Panc1 (cell line): ENCODE measurements at regions of chr7 and their contacts with region 1.

Region 1: GRCh38 chr7:4631664-4632171 is 50.4 kb upstream of the FOXK1 start:
- DNase-seq: peak; percentile 94
- ATAC-seq: peak; percentile 95
- H3K4me3 ChIP-seq: peak overlapping the region; percentile 30 to 70
- H3K27ac ChIP-seq: peak overlapping the region; percentile 67
- H3K4me1 ChIP-seq: peaks cover 16% of the 10 kb centered on the region
- H3K27me3 ChIP-seq: no peaks in the 10 kb centered on the region
- CTCF ChIP-seq: peak; percentile 86

Region 2: DNA sequence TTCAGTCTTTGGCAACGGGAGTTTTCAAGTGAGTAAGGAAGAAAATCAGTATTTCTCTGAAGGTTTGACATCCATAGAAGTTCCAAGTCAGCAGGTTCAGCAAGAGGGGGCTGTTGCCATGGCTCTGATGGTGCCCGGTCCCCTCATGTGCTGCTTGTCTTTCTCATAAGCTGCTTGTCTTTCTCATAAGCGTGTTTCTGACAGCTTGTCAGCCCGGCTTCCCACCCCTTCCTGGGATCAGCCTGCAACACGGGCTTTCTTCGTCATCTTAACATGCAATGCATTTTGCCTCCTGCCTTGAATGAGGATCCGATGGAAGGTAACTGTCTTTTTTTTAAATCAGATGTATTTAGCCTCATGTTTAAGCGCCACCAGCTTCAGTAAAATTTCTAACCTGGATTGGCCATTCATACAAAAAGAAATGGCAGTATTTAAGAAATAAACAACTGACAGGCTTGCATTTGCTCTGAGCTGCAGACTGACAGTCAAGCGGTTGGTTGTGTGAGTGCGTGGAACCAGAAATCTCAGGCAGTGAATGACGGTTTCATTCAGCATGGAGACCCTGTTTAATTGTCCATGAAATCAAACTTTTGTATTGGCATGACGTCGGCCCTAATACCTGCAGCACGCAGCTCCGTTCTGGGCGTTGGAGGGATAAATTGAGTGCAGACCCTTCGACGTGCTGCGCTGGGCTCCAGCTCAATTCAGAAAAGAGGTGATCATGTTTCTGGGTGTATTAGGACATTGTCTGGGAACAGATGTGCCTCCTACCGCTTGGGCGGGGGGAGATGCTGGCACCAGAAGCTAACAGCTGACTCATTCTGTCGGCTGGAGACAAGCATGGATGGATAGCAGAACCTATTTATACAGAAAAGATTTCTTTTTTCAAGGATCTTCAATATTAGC is 404.4 kb before region 1 on chr7:
- CTCF ChIA-PET with region 1: no interaction called
- POLR2A ChIA-PET with region 1: interaction called, 15 read pairs
- in situ Hi-C with region 1: no loop called
- intact Hi-C with region 1: no loop called
- DNase-seq: no peak
- ATAC-seq: no peak
- H3K4me3 ChIP-seq: no peak overlapping the region
- H3K27ac ChIP-seq: no peak overlapping the region
- H3K4me1 ChIP-seq: no peaks in the 10 kb centered on the region
- H3K27me3 ChIP-seq: no peaks in the 10 kb centered on the region
- CTCF ChIP-seq: no peak

Region 3: DNA sequence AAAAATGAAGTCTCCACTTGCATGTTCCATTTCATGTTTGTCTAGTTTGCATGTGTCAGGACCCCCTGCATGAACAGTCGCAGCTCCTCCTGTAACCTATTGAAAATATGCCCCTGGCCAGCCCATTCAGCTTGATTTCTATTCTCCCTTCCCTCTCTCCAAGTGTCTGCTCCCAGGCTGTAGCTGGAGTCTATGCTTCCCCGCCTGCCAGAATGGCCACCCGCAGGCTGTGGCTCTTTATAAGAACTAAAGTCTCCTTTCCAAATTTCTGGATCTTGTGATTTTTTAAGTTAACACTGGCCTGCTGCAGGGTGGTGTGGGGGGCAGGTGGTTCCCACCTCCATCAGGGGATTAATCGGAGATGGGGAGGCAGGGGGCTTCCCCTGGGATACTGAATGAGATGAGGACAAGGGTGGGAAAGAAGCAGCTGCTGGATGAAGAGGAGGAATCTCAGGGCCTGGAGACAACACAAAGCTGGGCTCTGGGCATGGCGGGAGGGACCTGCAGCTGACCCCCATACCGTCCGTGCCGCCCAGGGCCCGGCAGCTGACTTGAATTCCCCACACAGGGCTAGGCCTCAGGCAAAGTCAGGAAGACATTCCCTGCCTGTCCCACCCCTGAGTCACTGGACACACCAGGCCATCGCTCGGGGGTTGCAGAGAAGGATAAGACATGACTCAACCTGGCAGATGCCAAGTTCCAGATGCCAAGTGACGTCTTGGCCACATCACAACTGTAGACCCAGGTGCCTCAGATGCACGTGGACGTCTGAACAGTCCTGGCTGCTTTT is 349.1 kb before region 1 on chr7:
- CTCF ChIA-PET with region 1: no interaction called
- POLR2A ChIA-PET with region 1: no interaction called
- in situ Hi-C with region 1: no loop called
- intact Hi-C with region 1: no loop called
- DNase-seq: peak; percentile 35
- ATAC-seq: peak; percentile 82
- H3K4me3 ChIP-seq: no peak overlapping the region
- H3K27ac ChIP-seq: no peak overlapping the region
- H3K4me1 ChIP-seq: no peaks in the 10 kb centered on the region
- H3K27me3 ChIP-seq: no peaks in the 10 kb centered on the region
- CTCF ChIP-seq: no peak

Region 4: GRCh38 chr7:4575254-4575653 is 56.5 kb before region 1 on chr7:
- CTCF ChIA-PET with region 1: no interaction called
- POLR2A ChIA-PET with region 1: interaction called, 11 read pairs
- in situ Hi-C with region 1: no loop called
- intact Hi-C with region 1: no loop called
- DNase-seq: no peak
- ATAC-seq: no peak
- H3K4me3 ChIP-seq: no peak overlapping the region
- H3K27ac ChIP-seq: no peak overlapping the region
- H3K4me1 ChIP-seq: no peaks in the 10 kb centered on the region
- H3K27me3 ChIP-seq: no peaks in the 10 kb centered on the region; the same call in 1 of the 2 replicates
- CTCF ChIP-seq: no peak

Region 5: DNA sequence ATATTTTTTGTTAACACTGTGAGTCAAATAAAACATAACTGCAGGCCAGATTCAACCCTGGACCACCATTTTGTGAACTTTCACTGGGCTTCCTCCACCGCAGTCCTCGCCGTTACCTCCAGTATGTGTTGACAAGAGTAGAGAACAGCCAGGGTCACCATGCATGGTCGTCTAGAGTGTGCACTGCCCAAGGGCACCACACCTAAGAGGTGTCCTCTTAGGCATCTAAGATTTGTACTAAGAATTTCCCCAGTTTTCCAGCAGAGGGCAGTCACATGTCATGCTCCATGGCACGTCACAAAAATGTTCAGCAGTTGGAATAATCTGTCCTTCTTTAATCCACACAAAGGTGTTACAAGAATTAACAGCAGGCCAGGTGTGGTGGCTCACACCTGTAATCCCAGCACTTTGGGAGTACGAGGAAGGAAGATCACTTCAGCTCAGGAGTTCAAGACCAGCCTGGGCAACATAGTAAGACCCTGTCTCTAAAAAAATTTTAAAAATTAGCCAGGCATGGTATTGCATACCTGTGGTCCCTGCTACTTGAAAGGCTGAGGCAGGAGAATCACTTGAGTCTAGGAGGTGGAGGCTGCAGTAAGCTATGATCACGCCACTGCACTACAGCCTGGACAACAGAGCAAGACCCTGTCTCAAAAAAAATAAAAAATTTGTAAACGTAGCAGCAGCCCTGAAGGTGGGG is 20.8 kb before region 1 on chr7:
- CTCF ChIA-PET with region 1: interaction called, 10 read pairs
- POLR2A ChIA-PET with region 1: no interaction called
- in situ Hi-C with region 1: no loop called
- intact Hi-C with region 1: loop called (anchors 1 kb)
- DNase-seq: peak; percentile 63
- ATAC-seq: peak; percentile 87
- H3K4me3 ChIP-seq: no peak overlapping the region
- H3K27ac ChIP-seq: no peak overlapping the region
- H3K4me1 ChIP-seq: peaks cover 5% of the 10 kb centered on the region; the same call in 1 of the 2 replicates
- H3K27me3 ChIP-seq: no peaks in the 10 kb centered on the region
- CTCF ChIP-seq: peak; percentile 96

Region 6: DNA sequence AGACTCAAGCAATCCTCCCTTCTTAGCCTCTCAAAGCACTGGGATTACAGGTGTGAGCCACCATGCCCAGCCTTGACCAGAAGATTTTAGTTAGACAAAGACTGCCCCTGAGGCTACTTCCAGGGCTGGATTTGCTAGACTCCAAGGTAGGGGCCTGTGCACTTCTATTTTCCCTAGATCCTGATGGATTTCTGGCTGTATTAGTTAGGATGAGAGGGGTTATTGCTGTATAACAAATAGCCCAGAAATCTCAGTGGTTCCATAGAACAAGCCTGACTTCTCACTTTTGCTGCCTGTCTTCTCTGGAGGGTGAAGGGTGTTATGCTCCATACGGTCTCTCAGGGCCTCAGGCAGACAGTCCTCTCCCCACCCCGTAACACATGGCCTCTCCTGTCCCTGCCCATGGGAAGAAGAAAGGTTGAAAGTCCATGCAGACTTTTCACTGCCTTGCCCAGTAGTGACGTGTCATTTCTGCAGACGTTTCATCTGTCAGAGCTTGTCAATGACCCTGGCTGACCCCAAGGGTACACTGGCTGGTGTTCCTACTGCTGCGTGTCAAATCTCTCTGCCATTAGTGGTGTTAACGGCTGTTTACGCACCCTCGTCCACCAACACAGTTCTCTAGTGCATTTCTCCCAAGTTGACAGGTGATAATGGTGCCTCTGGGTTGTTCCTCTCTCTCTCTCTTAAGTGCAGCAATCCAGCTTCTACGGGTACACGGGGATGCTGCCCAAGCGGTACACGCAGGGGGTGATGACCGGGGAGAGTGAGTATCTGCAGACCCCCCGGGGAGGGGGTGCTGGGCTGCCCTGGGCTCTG is 662.7 kb after region 1 on chr7:
- CTCF ChIA-PET with region 1: no interaction called
- POLR2A ChIA-PET with region 1: no interaction called
- in situ Hi-C with region 1: no loop called
- intact Hi-C with region 1: no loop called
- DNase-seq: no peak
- ATAC-seq: no peak
- H3K4me3 ChIP-seq: no peak overlapping the region
- H3K27ac ChIP-seq: no peak overlapping the region
- H3K4me1 ChIP-seq: no peaks in the 10 kb centered on the region
- H3K27me3 ChIP-seq: no peaks in the 10 kb centered on the region
- CTCF ChIP-seq: no peak